Sigmoid colon (tissue), 7 donors: ENCODE measurements at regions of chr18 and their contacts with region 1.

Region 1: GRCh38 chr18:7946734-7947377 is 379.7 kb downstream of the PTPRM start:
- DNase-seq: no peak
- H3K4me3 ChIP-seq: peak overlapping the region in 3 of 4 donors; percentile 8 to 16 (median 9)
- H3K27ac ChIP-seq: peak overlapping the region; percentile 3 to 82 (median 78)
- H3K4me1 ChIP-seq: peaks cover 0 to 35% (median 28%) of the 10 kb centered on the region in 4 donors
- H3K27me3 ChIP-seq: no peaks in the 10 kb centered on the region
- CTCF ChIP-seq: no peak
- EP300 ChIP-seq: no peak
- POLR2A ChIP-seq: no peak

Region 2: DNA sequence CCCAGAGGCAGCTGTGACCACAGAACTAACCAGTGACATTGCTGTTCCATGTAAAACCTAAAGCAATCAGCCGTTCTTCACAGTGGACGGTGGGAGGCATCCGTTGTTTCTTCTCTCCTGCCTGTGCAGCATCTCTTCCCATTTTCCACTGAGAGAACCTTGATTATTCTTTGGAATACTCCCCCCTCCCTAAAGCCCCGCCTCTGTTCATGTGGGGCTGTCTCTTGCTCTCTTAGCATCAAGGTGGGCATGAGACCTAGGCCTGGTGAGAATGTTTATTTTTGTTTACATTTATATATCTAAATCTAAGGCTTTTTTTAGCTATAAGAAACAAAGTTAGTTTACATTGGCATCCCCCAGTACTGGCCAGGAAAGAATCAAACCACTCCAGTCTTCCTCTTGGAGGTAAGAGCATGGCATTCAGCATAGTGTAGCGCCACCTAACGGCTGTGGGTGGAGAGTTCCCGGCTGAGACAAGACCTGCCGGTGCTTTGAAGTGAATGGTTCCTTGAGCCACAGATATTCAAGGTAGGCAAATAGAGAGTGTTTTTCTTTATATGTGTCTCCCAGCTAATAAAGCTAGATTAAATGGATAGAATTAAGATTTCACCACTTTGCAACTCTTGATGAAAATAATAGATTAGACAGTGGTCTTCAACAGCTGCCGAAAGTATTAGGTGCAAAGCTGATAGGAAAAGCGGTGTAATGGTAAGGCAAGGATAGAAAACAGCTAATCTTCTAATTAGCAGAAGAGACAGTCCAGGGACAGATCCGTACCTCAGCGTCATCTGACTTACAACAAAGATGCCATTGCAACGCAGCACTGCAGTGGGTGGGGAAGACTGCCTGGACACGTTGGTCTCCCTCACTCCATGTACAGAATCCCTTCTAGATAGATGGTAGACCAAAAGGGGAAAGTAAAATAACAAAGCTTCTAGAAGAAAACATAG is 442.8 kb after region 1 on chr18:
- intact Hi-C with region 1: loop called (anchors 10 kb)
- DNase-seq: peak; percentile 76
- H3K4me3 ChIP-seq: no peak overlapping the region
- H3K27ac ChIP-seq: no peak overlapping the region
- H3K4me1 ChIP-seq: no peaks in the 10 kb centered on the region
- H3K27me3 ChIP-seq: no peaks in the 10 kb centered on the region
- CTCF ChIP-seq: peak; percentile 35 to 73 (median 68)
- EP300 ChIP-seq: no peak
- POLR2A ChIP-seq: no peak